GM12878 (cell line): ENCODE measurements at regions of chr6 and their contacts with region 1.

Region 1: DNA sequence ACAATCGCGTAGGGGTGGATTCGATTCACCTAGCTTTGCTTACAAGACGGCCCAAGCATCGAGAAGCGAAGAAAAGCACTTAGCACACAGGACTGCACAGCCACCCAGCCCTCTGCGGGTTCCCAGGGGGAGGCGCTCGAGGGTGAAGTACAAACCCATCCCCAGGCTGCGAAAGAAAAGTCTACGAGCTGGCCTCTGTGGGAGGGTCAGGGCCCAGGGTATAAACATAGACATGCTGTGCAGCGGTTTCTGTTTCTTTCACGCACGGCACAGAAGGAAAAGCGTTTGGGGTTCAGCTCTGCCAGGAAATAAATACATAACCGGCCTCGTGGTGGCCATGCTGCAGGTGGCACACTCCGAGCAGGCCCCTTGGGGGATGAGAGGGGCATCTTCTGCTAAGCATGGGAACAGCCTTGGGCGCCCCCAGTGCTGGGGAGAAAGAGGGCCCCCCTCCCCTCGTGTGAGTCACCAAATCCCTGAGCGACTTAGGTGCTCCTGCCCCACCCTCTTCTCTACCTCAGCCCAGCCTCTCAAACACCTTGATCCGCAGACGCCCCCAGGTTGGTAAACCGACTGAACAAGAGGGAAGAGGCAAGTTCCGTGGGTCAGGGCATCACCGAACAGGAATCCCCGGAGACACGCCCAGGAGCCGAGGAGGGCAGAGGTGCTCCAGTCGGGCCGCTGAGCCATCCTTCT is 91.6 kb upstream of the RIPOR2 start:
- DNase-seq: peak; percentile 60
- ATAC-seq: peak; percentile 98
- H3K4me3 ChIP-seq: 0 out of 2 replicates have a peak overlapping the region, but pooled peaks have one; percentile 34
- H3K27ac ChIP-seq: no peak overlapping the region
- H3K4me1 ChIP-seq: peaks cover 7% of the 10 kb centered on the region
- H3K27me3 ChIP-seq: no peaks in the 10 kb centered on the region
- CTCF ChIP-seq: peak; percentile 71 to 82 (median 71)
- EP300 ChIP-seq: no peak
- POLR2A ChIP-seq: no peak
- RAD21 ChIP-seq: peak; percentile 86

Region 2: DNA sequence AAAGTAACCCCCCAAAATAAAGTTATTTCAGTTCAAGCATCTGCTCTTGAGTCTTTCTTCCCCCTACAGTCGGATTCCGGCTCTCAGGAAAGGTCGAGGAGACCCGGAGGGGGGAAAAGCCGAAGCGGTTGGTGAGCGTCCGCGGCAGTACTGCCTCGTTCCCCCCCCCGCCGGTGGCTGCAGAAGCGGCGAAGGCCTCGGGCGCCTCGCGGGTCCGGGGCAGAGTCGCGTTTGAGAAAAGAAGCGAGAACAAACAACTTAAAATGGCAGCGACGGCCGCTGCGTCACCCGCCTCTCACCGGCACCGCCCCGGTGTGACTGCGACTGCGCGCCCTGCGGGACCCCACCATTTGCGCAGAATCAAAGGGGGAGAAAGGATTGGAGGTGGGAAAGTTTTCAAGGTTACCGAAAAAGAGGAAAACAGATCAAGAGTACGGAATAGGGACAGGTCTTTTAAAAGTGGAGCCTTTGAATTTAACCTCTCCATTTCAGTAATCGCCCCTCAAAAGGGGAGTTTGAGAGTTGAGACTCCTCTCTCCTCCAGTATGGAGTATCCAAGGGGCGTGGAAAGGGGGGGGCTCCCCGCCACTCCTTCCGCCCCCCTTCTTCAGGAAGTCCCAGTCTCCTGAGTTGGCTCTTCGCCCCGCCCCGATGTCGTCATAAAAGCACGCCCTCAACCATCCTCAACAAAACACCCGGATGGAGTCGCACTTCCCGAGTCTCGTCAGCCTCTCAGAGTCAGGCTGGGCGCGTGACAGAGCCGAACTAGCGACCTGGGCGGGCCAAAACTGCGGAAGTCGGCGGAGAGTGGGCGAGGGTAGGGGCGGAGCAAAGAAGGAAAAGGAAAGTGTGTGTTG is 306.5 kb before region 1 on chr6:
- CTCF ChIA-PET with region 1: no interaction called
- POLR2A ChIA-PET with region 1: interaction called, 9 read pairs
- RAD21 ChIA-PET with region 1: no interaction called
- SMC1A ChIA-PET with region 1: interaction called, 3 read pairs
- in situ Hi-C with region 1: no loop called
- intact Hi-C with region 1: loop called (anchors 10 kb)
- DNase-seq: peak; percentile 98
- ATAC-seq: peak; percentile 89
- H3K4me3 ChIP-seq: peak overlapping the region; percentile 86
- H3K27ac ChIP-seq: peak overlapping the region; percentile 95
- H3K4me1 ChIP-seq: no peaks in the 10 kb centered on the region; the same call in 1 of the 2 replicates
- H3K27me3 ChIP-seq: no peaks in the 10 kb centered on the region
- CTCF ChIP-seq: no peak
- EP300 ChIP-seq: no peak
- POLR2A ChIP-seq: peak; percentile 73
- RAD21 ChIP-seq: no peak

Region 3: DNA sequence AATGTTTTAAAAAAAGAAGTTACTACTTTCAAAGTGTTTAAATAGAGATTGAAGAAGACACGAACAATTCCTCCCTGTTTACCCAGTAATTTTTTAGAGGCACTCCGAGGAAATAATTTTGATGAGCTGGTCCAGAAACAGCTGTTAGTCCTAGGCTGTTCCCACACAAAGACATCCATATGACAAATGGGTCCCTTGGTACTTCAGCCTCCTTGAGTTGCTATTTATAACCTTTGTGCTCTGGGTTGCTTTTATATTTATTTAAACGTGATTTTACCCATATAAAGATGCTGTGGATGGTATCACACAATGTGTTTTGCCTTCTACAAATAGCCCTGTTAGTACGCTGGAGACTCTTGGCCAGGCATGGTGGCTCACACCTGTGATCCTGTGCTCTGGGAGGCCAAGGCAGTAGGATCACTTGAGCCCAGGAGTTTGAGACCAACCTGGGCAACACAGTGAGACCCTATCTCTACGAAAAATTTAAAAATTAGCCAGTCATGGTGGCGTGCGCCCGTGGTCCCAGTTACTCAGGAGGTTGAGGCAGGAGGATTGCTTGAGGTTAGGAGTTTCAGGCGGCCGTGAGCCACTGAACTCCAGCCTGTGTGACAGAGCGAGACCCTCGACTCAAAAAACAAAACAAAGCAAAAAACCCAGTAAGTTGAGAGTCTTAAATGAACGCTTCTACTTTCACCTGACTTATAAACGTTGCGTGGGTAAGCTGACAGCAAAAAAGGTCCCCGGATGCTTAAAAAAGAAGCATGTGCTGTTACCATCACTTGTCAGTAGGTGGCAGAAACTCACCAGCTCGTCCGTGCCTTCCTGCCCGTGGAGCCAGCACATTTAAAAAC is 171.7 kb before region 1 on chr6:
- CTCF ChIA-PET with region 1: interaction called, 314 read pairs
- POLR2A ChIA-PET with region 1: no interaction called
- RAD21 ChIA-PET with region 1: interaction called, 20 read pairs
- SMC1A ChIA-PET with region 1: interaction called, 52 read pairs
- in situ Hi-C with region 1: no loop called
- intact Hi-C with region 1: no loop called
- DNase-seq: peak; percentile 58
- ATAC-seq: peak; percentile 85
- H3K4me3 ChIP-seq: no peak overlapping the region
- H3K27ac ChIP-seq: no peak overlapping the region
- H3K4me1 ChIP-seq: peaks cover 32% of the 10 kb centered on the region
- H3K27me3 ChIP-seq: no peaks in the 10 kb centered on the region
- CTCF ChIP-seq: peak; percentile 78 to 90 (median 87)
- EP300 ChIP-seq: no peak
- POLR2A ChIP-seq: no peak
- RAD21 ChIP-seq: peak; percentile 98

Region 4: GRCh38 chr6:25006565-25007001 is 20.8 kb before region 1 on chr6:
- CTCF ChIA-PET with region 1: interaction called, 19 read pairs
- POLR2A ChIA-PET with region 1: interaction called, 4 read pairs
- RAD21 ChIA-PET with region 1: interaction called, 25 read pairs
- SMC1A ChIA-PET with region 1: interaction called, 9 read pairs
- in situ Hi-C with region 1: no loop called
- intact Hi-C with region 1: no loop called
- DNase-seq: no peak
- ATAC-seq: peak; percentile 72
- H3K4me3 ChIP-seq: 0 out of 2 replicates have a peak overlapping the region, but pooled peaks have one; percentile 28
- H3K27ac ChIP-seq: peak overlapping the region; percentile 46; the same call in 1 of the 2 replicates
- H3K4me1 ChIP-seq: peaks cover 14% of the 10 kb centered on the region
- H3K27me3 ChIP-seq: no peaks in the 10 kb centered on the region
- CTCF ChIP-seq: no peak
- EP300 ChIP-seq: peak in 1 of 2 experiments; percentile 44; a peak in 1 of 4 replicates
- POLR2A ChIP-seq: no peak
- RAD21 ChIP-seq: no peak

Region 5: DNA sequence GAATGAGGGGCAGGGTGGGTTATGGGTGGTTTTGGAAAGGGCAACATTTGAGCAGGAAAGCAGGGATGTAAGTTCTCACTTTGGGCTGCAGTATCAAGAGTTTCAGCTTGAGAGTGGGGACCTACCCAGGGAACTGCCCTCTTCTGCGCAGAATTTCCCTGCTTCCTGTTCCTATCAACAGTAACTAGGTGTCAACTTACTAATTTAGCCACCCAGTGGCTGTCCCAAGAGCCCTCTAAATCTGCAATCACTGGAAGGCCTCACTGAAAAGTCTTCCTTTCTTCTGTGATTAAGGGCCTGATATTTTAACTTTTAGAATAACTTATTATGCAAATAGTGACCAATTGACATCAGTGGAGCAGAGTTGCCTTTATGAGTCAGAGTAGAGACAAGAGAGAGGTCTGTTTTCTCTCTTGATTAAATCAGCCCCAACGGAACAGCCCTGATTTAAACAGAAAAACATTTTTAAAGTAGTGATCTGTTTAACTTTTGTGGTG is 26.6 kb after region 1 on chr6:
- CTCF ChIA-PET with region 1: interaction called, 71 read pairs
- POLR2A ChIA-PET with region 1: interaction called, 27 read pairs
- RAD21 ChIA-PET with region 1: interaction called, 51 read pairs
- SMC1A ChIA-PET with region 1: interaction called, 304 read pairs
- in situ Hi-C with region 1: no loop called
- intact Hi-C with region 1: no loop called
- DNase-seq: no peak
- ATAC-seq: peak; percentile 93
- H3K4me3 ChIP-seq: no peak overlapping the region
- H3K27ac ChIP-seq: peak overlapping the region; percentile 41
- H3K4me1 ChIP-seq: peaks cover 26% of the 10 kb centered on the region
- H3K27me3 ChIP-seq: no peaks in the 10 kb centered on the region
- CTCF ChIP-seq: peak in 2 of 3 experiments; percentile 16 to 20; a peak in 2 of 6 replicates
- EP300 ChIP-seq: peak in 1 of 2 experiments; percentile 29; a peak in 1 of 4 replicates
- POLR2A ChIP-seq: no peak
- RAD21 ChIP-seq: peak; percentile 21; the same call in 1 of the 2 replicates

Region 6: DNA sequence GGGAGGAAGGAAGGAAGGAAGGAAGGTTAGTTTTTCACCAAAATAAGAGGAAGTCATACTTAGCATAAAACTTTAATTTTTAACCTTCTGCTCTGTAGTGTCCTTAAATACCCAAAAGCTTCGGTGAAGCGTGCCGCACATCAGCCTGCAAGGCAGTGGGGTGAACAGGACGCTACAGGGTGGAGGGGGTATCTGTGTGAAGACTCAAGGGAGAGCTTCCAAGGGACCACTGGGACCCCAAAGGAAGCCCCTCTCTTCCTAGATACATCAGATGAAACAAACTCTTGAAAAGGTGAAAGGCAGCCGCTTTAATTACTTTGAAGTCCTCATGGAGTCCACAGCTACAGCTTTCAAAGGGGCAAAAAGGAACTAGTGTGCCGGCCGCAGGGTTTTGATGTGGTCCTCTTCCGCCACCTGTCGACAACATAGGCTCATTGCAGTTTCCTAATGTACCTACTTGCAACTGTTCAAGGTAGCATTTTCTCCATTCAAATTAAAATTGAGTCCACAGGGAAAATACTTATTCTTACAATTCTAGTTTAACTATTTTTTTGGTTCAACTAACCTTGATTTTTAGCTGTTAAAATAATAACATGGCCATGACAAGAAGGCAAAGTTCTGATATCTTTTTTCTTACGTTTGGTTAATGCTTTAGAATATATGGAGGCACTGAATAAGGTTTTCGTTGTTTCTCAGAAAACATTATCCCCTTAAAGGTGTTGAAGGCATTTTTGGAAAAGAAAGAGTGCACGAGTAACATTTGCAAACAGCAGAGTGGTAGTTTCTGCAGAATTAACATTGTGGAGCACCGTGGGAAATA is 43.4 kb after region 1 on chr6:
- CTCF ChIA-PET with region 1: interaction called, 204 read pairs
- POLR2A ChIA-PET with region 1: interaction called, 12 read pairs
- RAD21 ChIA-PET with region 1: interaction called, 134 read pairs
- SMC1A ChIA-PET with region 1: interaction called, 109 read pairs
- in situ Hi-C with region 1: no loop called
- intact Hi-C with region 1: loop called (anchors 1 kb)
- DNase-seq: peak; percentile 65
- ATAC-seq: peak; percentile 96
- H3K4me3 ChIP-seq: peak overlapping the region; percentile 70
- H3K27ac ChIP-seq: no peak overlapping the region
- H3K4me1 ChIP-seq: no peaks in the 10 kb centered on the region
- H3K27me3 ChIP-seq: no peaks in the 10 kb centered on the region
- CTCF ChIP-seq: peak; percentile 85 to 90 (median 88)
- EP300 ChIP-seq: no peak
- POLR2A ChIP-seq: no peak
- RAD21 ChIP-seq: peak; percentile 97

Region 7: GRCh38 chr6:25175196-25175595 is 147.8 kb after region 1 on chr6:
- CTCF ChIA-PET with region 1: interaction called, 15 read pairs
- POLR2A ChIA-PET with region 1: interaction called, 5 read pairs
- RAD21 ChIA-PET with region 1: interaction called, 3 read pairs
- SMC1A ChIA-PET with region 1: interaction called, 4 read pairs
- in situ Hi-C with region 1: no loop called
- intact Hi-C with region 1: no loop called
- DNase-seq: no peak
- ATAC-seq: no peak
- H3K4me3 ChIP-seq: no peak overlapping the region
- H3K27ac ChIP-seq: no peak overlapping the region
- H3K4me1 ChIP-seq: no peaks in the 10 kb centered on the region
- H3K27me3 ChIP-seq: no peaks in the 10 kb centered on the region
- CTCF ChIP-seq: no peak
- EP300 ChIP-seq: no peak
- POLR2A ChIP-seq: no peak
- RAD21 ChIP-seq: no peak

Region 8: DNA sequence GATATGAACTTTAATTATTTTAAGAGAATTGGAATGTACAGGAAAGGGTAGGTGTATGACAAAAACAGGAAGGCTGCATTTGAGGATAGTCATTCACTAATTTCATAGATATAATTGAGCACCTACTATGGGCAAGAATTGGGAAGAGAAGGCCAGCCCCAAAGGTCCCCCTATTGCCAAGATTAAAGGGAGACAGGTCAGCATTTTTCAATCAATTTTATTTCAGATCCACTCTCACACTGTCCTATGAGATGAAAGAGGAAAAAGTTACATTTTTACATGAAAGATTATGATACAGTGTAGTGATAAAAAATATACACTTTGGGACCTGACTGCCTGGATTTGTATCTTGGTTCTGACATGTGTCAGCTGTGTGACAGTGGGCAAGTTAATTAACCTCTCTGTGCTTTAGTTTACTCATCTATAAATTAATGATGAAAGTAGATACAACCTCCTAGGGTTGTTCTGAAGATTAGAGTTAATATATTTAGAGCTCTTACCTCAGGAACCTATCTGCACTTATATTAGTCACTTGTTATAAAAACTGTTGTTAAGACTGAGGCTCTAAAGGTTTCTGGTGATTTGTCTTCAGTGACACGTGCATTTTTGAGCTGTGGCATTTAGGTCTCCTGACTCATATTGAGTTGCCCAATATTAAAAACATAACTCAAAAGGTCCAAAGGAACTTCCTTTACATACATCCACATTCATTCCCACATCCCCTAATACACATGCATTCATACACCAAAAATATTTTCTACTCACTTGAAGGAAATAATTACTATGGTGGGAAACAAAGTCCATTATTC is 670.4 kb after region 1 on chr6:
- CTCF ChIA-PET with region 1: no interaction called
- POLR2A ChIA-PET with region 1: no interaction called
- RAD21 ChIA-PET with region 1: no interaction called
- SMC1A ChIA-PET with region 1: no interaction called
- in situ Hi-C with region 1: no loop called
- intact Hi-C with region 1: no loop called
- DNase-seq: no peak
- ATAC-seq: no peak
- H3K4me3 ChIP-seq: no peak overlapping the region
- H3K27ac ChIP-seq: no peak overlapping the region
- H3K4me1 ChIP-seq: no peaks in the 10 kb centered on the region
- H3K27me3 ChIP-seq: no peaks in the 10 kb centered on the region
- CTCF ChIP-seq: no peak
- EP300 ChIP-seq: no peak
- POLR2A ChIP-seq: no peak
- RAD21 ChIP-seq: no peak